CD4-positive, alpha-beta T cell (primary cell): ENCODE measurements at regions of chr19 and their contacts with region 1.

Region 1: DNA sequence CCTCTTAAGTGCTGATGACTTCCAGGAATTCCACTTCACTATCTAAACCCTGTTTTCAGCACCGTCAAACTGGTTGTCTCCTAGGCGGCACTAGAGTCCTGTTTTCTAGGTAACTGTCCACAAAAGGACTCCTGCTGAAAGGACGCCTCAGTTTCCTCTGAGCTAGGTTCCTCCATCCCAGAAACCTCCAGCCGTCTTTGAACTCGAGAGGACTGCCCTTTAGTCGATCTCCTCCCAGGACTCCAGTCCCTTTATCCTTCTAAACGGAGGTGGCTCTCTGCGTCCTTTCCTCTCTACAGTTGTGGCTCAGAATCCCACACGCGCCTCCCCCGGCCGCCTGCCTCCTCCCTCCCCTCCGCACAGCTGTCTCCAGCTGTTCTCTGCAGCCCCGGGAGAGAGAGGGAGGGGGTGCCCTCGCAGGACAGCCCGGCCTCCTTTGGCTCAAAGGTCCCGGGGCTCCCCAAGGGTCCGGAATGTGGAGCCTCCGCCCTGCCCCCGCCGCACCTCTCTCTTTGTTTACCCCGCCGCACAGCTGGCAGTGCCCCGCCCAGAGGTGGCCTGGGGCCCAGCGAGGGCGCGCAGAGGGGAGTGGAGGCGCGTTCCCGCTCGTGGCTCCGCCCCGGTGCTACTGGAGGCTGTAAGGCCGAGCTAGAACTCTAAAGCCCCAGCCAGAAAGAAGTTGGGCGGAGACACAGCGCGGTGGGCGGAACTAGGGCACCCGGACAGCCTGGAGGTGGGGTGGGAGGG is 2.4 kb downstream of the LTBP4 start:
- DNase-seq: peak; percentile 91 to 99 (median 97)
- ATAC-seq: peak; percentile 72
- H3K4me3 ChIP-seq: peak overlapping the region; percentile 66
- H3K4me3 Mint-ChIP-seq: peak overlapping the region; percentile 88
- H3K27ac ChIP-seq: peak overlapping the region in 1 of 2 donors; percentile 49
- H3K27ac Mint-ChIP-seq: peak overlapping the region; percentile 88
- H3K4me1 ChIP-seq: peaks cover 93% of the 10 kb centered on the region
- H3K4me1 Mint-ChIP-seq: peaks cover 79% of the 10 kb centered on the region
- H3K27me3 ChIP-seq: peaks cover 29 to 33% of the 10 kb centered on the region in 2 experiments
- H3K27me3 Mint-ChIP-seq: peaks cover 38% of the 10 kb centered on the region
- CTCF ChIP-seq: no peak

Region 2: GRCh38 chr19:40305403-40305802 is 298.2 kb before region 1 on chr19:
- CTCF ChIA-PET with region 1: no interaction called
- POLR2A ChIA-PET with region 1: no interaction called
- intact Hi-C with region 1: loop called (anchors 1 kb)
- DNase-seq: peak; percentile 49 to 86 (median 69)
- ATAC-seq: no peak
- H3K4me3 ChIP-seq: no peak overlapping the region
- H3K4me3 Mint-ChIP-seq: no peak overlapping the region
- H3K27ac ChIP-seq: no peak overlapping the region
- H3K27ac Mint-ChIP-seq: no peak overlapping the region
- H3K4me1 ChIP-seq: no peaks in the 10 kb centered on the region
- H3K4me1 Mint-ChIP-seq: no peaks in the 10 kb centered on the region
- H3K27me3 ChIP-seq: no peaks in the 10 kb centered on the region
- H3K27me3 Mint-ChIP-seq: no peaks in the 10 kb centered on the region
- CTCF ChIP-seq: peak; percentile 78

Region 3: GRCh38 chr19:40465557-40466150 is 137.9 kb before region 1 on chr19 and contains the start of gene BLVRB:
- CTCF ChIA-PET with region 1: interaction called, 5 read pairs
- POLR2A ChIA-PET with region 1: interaction called, 5 read pairs
- intact Hi-C with region 1: loop called (anchors 5 kb)
- DNase-seq: peak; percentile 98 to 100 (median 100)
- ATAC-seq: peak; percentile 81
- H3K4me3 ChIP-seq: peak within 1 kb of the TSS; percentile 81
- H3K4me3 Mint-ChIP-seq: peak within 1 kb of the TSS; percentile 93
- H3K27ac ChIP-seq: peak within 1 kb of the TSS; percentile 13 to 62
- H3K27ac Mint-ChIP-seq: peak within 1 kb of the TSS; percentile 87
- H3K4me1 ChIP-seq: peaks cover 35% of the 10 kb centered on the region
- H3K4me1 Mint-ChIP-seq: peaks cover 30% of the 10 kb centered on the region
- H3K27me3 ChIP-seq: peaks cover 0 to 16% of the 10 kb centered on the region in 2 experiments
- H3K27me3 Mint-ChIP-seq: peaks cover 25% of the 10 kb centered on the region
- CTCF ChIP-seq: no peak
- total RNA-seq, gene BLVRB: 4.3 to 5.2 TPM

Region 4: GRCh38 chr19:40497214-40497613 is 106.3 kb before region 1 on chr19:
- CTCF ChIA-PET with region 1: no interaction called
- POLR2A ChIA-PET with region 1: no interaction called
- intact Hi-C with region 1: no loop called
- DNase-seq: no peak
- ATAC-seq: no peak
- H3K4me3 ChIP-seq: no peak overlapping the region
- H3K4me3 Mint-ChIP-seq: no peak overlapping the region
- H3K27ac ChIP-seq: no peak overlapping the region
- H3K27ac Mint-ChIP-seq: no peak overlapping the region
- H3K4me1 ChIP-seq: no peaks in the 10 kb centered on the region
- H3K4me1 Mint-ChIP-seq: no peaks in the 10 kb centered on the region
- H3K27me3 ChIP-seq: peaks cover 0 to 2% of the 10 kb centered on the region in 2 experiments
- H3K27me3 Mint-ChIP-seq: peaks cover 22% of the 10 kb centered on the region
- CTCF ChIP-seq: no peak

Region 5: GRCh38 chr19:40614622-40615411 is 11.3 kb after region 1 on chr19:
- CTCF ChIA-PET with region 1: interaction called, 10 read pairs
- POLR2A ChIA-PET with region 1: interaction called, 51 read pairs
- intact Hi-C with region 1: loop called in 1 of 2 experiments (anchors 1 kb)
- DNase-seq: peak; percentile 53 to 93 (median 78)
- ATAC-seq: peak; percentile 19
- H3K4me3 ChIP-seq: peak overlapping the region; percentile 82
- H3K4me3 Mint-ChIP-seq: peak overlapping the region; percentile 93
- H3K27ac ChIP-seq: peak overlapping the region in 1 of 2 donors; percentile 55
- H3K27ac Mint-ChIP-seq: peak overlapping the region; percentile 95
- H3K4me1 ChIP-seq: peaks cover 63% of the 10 kb centered on the region
- H3K4me1 Mint-ChIP-seq: peaks cover 53% of the 10 kb centered on the region
- H3K27me3 ChIP-seq: no peaks in the 10 kb centered on the region
- H3K27me3 Mint-ChIP-seq: no peaks in the 10 kb centered on the region
- CTCF ChIP-seq: no peak

Region 6: DNA sequence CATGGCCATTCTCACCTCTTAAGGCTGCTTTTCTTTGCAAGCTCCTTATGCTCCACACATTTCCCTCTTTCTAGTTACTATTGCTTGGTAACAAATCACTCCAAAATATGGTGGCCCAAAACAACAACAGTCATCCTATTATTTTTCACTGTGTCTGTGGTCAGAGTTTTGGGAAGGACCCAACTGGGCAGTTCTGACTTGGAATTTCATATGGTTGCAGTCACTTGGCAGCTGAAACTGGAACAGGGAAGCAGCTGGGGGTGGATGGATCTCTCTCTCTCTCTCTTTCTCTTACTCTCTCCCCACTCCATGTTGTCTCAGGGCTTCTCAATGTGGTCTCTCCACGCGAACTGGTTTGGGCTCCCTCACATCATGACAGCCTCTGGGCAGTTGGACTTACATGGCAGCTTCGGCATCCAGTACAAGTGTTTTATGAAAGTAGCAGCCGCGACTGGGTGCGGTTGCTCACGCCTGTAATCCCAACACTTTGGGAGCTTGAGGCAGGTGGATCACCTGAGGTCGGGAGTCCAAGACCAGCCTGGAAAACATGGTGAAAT is 47.3 kb after region 1 on chr19:
- CTCF ChIA-PET with region 1: no interaction called
- POLR2A ChIA-PET with region 1: no interaction called
- intact Hi-C with region 1: no loop called
- DNase-seq: no peak
- ATAC-seq: no peak
- H3K4me3 ChIP-seq: no peak overlapping the region
- H3K4me3 Mint-ChIP-seq: no peak overlapping the region
- H3K27ac ChIP-seq: no peak overlapping the region
- H3K27ac Mint-ChIP-seq: no peak overlapping the region
- H3K4me1 ChIP-seq: no peaks in the 10 kb centered on the region
- H3K4me1 Mint-ChIP-seq: no peaks in the 10 kb centered on the region
- H3K27me3 ChIP-seq: peaks cover 0 to 2% of the 10 kb centered on the region in 2 experiments
- H3K27me3 Mint-ChIP-seq: peaks cover 7% of the 10 kb centered on the region
- CTCF ChIP-seq: no peak